Transverse colon (tissue), 4 donors: ENCODE measurements at regions of chr2 and their contacts with region 1.

Region 1: DNA sequence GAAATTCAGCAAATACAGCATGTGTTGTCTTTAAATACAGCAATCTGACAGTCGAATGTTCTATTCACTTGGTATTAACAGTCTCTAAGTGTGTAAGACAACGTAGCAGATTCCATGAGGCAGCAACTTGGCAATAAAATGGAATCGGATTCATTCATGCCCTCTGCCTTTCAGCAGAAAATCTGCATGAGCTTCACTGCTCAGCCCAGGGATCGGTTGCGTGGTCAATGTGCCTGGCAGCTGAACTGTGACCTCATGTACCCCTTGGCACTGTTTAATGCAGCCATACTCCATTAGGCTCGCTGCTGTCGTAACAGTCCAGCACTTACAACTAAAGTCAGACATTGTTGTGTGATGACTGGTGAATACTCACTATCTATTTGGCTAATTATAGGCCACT is 17.7 kb upstream of the RGPD4 start:
- DNase-seq: no peak
- H3K4me3 ChIP-seq: no peak overlapping the region
- H3K27ac ChIP-seq: no peak overlapping the region
- H3K4me1 ChIP-seq: no peaks in the 10 kb centered on the region
- H3K27me3 ChIP-seq: no peaks in the 10 kb centered on the region
- CTCF ChIP-seq: no peak
- EP300 ChIP-seq: no peak
- POLR2A ChIP-seq: no peak

Region 2: GRCh38 chr2:107936433-107937359 is 127.7 kb after region 1 on chr2:
- in situ Hi-C with region 1: loop called in 1 of 4 experiments (anchors 25 kb)
- intact Hi-C with region 1: no loop called
- DNase-seq: no peak
- H3K4me3 ChIP-seq: no peak overlapping the region
- H3K27ac ChIP-seq: no peak overlapping the region
- H3K4me1 ChIP-seq: no peaks in the 10 kb centered on the region
- H3K27me3 ChIP-seq: no peaks in the 10 kb centered on the region
- CTCF ChIP-seq: peak; percentile 28 to 39 (median 30)
- EP300 ChIP-seq: no peak
- POLR2A ChIP-seq: no peak

Region 3: DNA sequence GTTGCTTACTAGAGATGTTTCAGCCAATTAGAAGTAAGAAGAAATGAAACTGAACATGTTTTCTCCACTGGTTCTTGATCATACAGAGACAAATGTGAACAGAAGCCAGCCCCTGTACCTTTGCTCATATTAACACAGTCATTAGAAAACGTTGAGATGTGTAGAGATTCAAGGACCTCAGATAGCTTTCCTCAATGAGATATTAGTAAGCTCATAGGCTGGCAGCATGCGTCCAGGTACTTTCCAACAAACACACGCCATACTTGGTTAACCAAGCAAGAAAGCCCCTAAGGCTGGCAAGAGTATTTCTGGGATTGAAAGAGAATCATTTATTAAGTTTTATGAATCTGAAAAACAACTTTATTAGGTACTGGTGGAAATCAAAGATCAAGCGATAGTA is 214.8 kb after region 1 on chr2:
- in situ Hi-C with region 1: no loop called
- intact Hi-C with region 1: no loop called
- DNase-seq: no peak
- H3K4me3 ChIP-seq: no peak overlapping the region
- H3K27ac ChIP-seq: no peak overlapping the region
- H3K4me1 ChIP-seq: no peaks in the 10 kb centered on the region
- H3K27me3 ChIP-seq: no peaks in the 10 kb centered on the region
- CTCF ChIP-seq: no peak
- EP300 ChIP-seq: no peak
- POLR2A ChIP-seq: no peak